ENCODE measurements at regions of chr1 and their contacts with region 1.

Region 1: DNA sequence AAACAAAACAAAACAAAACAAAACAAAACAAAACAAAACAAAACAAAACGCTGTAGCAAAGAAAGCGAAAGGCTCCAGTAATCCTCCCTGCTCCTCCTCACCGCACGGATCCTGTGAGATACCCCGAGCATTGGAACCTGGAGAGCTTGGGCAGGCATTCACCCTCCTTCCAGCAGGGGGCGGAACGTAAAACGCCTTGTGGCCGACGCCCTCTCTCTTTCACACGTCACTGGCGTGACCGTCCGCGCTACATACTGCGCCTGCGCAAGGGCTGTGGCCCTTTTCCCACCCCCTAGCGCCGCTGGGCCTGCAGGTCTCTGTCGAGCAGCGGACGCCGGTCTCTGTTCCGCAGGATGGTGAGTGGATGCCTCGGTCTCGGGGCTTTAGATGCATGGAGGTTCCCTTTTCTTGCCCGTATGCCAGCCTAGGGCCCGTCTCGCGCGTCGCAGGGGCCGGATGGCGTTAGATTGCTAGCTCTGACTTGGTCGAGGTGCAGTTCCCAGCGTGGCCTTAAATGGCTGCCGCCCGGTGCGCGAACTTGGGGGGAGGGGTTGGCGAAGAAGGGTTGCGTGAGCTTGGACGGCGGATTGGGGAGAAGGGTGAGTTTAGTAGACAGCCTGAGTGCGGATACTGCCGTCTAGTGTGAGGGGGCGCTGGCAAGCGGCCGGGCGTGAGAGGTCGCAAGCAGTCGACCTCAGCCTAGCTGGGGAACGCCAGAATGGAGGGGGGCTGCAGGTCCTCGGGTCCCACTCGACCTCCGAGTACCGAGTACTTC is at the start of gene RPL5:
- DNase-seq: peak; percentile 97
- ATAC-seq: peak; percentile 93
- H3K4me3 Mint-ChIP-seq: peak within 1 kb of the TSS; percentile 95
- H3K27ac Mint-ChIP-seq: peak within 1 kb of the TSS; percentile 97
- H3K4me1 Mint-ChIP-seq: peaks cover 35% of the 10 kb centered on the region
- H3K27me3 Mint-ChIP-seq: no peaks in the 10 kb centered on the region; the same call in 1 of the 2 replicates
- CTCF ChIP-seq: peak; percentile 81
- total RNA-seq, gene RPL5: 1,430 to 1,486 TPM (median 1,433 TPM) in 3 replicates

Region 2: DNA sequence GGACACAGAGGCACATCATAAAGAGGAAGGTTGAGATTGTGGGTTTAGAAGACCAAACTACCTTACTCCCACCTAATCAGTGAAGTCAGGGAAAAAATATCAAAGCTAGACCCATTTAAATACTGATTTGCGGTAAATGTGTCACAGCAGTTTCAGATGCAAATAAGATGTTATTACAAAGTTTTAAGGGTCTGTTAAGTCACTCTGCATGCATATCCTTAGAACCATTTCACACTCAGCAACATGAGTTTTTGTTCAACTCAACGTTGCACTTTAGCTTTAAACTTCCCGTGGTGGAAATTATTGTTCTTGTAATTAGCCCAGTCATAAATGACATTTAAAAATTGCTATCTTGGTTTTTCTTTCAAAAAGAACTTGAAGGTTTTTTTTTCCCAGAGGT is 498.3 kb before region 1 on chr1:
- CTCF ChIA-PET with region 1: no interaction called
- POLR2A ChIA-PET with region 1: no interaction called
- DNase-seq: no peak
- ATAC-seq: no peak
- H3K4me3 Mint-ChIP-seq: no peak overlapping the region
- H3K27ac Mint-ChIP-seq: no peak overlapping the region
- H3K4me1 Mint-ChIP-seq: no peaks in the 10 kb centered on the region; the same call in 1 of the 2 replicates
- H3K27me3 Mint-ChIP-seq: no peaks in the 10 kb centered on the region
- CTCF ChIP-seq: no peak

Region 3: DNA sequence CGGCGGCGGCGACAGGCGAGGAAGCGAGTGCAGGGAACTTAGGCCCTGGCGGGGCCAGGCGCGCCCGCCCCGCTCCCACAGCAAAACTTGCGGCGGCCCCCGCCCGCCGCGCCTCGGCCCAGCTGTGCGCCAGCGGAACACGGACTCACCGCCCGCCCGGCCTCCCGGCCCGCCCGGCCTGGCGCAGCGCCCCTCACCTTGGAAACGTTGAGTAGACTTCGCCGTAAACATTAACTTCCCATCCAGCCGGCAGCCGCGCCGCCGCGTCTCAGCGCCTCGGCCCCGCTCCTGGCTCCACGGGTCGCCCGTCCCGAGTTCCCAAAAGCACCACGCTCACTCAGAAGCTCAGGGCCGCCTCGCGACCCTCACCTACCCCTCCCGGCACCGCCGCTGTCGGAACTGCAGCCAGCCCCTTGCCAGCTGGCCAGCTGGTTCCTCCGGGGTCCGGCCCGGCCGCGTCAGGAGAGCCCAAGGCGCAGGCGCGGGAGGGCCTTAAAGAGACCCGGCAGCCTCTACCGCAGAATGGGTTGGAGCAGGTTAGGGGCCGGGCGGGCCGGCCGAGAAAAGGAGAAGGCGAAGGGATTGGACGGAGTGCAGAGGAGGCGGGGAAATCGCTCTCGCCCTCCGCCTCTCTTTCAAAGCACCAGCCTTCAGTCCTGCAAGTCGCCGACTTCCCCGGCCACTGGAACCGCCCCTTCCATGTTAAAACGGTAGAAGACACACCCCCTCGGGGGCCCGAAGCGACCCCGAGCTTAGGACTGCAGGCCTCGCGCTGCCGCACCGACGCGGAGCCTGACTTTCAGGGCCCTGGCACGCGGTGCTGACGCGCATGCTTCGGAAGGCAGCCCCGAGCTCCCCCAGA is 47.1 kb before region 1 on chr1 and contains the start of gene EVI5:
- CTCF ChIA-PET with region 1: interaction called, 11 read pairs
- POLR2A ChIA-PET with region 1: interaction called, 5 read pairs
- DNase-seq: peak; percentile 97
- ATAC-seq: peak; percentile 99
- H3K4me3 Mint-ChIP-seq: peak within 1 kb of the TSS; percentile 80
- H3K27ac Mint-ChIP-seq: peak within 1 kb of the TSS; percentile 30; the same call in 1 of the 2 replicates
- H3K4me1 Mint-ChIP-seq: peaks cover 16% of the 10 kb centered on the region
- H3K27me3 Mint-ChIP-seq: peaks cover 24% of the 10 kb centered on the region
- CTCF ChIP-seq: no peak
- total RNA-seq, gene EVI5: 11.4 to 15.5 TPM (median 14.3 TPM) in 3 replicates

Region 4: DNA sequence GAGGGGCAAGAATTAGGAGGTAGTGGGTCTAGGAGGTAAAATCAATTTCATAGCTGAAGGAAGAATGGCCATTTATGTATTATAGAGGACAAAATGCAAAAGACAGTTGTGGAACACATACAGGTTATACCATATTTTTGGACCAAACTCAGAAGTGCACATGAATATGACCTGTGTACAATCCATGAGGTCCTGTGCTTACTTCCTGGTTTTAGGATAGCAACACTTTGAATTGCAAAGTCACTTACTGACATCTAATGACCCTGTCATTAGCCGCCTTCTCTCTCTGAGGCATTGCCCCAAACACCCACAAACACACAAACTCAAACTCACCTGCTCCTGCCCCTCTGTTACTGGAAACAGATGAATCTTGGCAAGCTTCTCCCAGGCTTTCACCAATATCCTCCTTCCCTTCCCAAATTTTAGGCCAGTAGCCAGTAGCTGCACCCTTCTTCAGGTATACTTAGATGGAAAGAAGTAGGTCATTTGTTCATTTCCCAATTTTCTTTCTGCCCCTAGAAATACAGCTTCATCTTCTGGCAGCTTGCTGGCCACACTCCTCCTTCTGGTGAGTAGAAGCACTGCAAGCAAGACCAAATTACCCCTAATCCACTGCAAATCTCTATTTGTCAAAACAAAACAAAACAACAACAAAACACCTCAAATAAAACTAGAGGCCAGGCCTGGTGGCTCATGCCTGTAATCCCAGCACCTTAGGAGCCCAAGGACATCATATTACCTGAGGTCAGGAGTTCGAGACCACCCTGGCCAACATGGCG is 13.8 kb before region 1 on chr1:
- CTCF ChIA-PET with region 1: interaction called, 25 read pairs
- POLR2A ChIA-PET with region 1: interaction called, 5 read pairs
- DNase-seq: peak; percentile 20
- ATAC-seq: peak; percentile 80
- H3K4me3 Mint-ChIP-seq: no peak overlapping the region
- H3K27ac Mint-ChIP-seq: peak overlapping the region; percentile 44; the same call in 1 of the 2 replicates
- H3K4me1 Mint-ChIP-seq: peaks cover 2% of the 10 kb centered on the region; the same call in 1 of the 2 replicates
- H3K27me3 Mint-ChIP-seq: no peaks in the 10 kb centered on the region
- CTCF ChIP-seq: peak; percentile 40

Region 5: DNA sequence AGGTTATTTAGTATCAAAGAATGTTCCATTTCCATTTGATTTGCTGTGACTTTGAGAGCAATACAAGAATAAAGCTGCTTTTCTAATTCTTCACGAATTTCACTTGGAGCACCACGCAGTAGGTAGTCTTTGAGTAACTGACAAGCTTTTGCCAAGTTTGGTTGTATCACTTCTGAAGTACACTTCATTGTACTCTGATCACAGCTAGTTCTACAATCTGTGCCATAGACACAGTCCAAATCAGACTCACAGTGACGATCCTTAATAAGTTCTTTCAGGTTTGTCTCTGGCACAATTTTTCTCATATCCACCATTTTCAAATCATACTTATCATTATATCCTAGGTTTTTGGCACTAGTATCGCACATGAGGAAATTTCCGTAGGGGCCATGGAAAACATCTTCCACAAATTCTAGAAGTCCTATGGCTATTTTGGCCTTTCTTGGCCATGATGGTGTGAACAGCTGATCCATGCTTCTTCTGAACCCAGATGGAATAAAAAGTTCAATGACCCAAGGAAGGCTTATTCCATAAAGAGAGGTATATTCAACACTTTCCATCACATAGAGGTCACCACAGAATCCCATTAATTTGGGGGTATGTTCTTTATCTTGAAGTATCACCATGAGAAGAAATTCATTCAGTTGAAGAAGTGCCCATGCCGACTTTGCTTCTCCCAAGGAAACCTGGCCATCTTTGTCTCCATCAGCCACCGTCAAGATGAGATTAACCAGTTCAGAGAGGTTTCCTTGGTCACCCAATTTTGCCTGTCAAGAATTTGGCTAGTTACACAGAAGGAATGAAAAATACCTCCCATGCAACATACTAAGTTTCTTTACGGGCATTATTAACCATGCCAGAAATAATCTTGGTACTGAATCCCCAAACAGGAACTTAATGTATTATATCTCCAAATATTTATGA is 11.7 kb after region 1 on chr1:
- CTCF ChIA-PET with region 1: interaction called, 5 read pairs
- POLR2A ChIA-PET with region 1: interaction called, 12 read pairs
- DNase-seq: no peak
- ATAC-seq: peak; percentile 11; the same call in 1 of the 2 replicates
- H3K4me3 Mint-ChIP-seq: no peak overlapping the region
- H3K27ac Mint-ChIP-seq: no peak overlapping the region
- H3K4me1 Mint-ChIP-seq: no peaks in the 10 kb centered on the region
- H3K27me3 Mint-ChIP-seq: no peaks in the 10 kb centered on the region
- CTCF ChIP-seq: no peak

Region 6: DNA sequence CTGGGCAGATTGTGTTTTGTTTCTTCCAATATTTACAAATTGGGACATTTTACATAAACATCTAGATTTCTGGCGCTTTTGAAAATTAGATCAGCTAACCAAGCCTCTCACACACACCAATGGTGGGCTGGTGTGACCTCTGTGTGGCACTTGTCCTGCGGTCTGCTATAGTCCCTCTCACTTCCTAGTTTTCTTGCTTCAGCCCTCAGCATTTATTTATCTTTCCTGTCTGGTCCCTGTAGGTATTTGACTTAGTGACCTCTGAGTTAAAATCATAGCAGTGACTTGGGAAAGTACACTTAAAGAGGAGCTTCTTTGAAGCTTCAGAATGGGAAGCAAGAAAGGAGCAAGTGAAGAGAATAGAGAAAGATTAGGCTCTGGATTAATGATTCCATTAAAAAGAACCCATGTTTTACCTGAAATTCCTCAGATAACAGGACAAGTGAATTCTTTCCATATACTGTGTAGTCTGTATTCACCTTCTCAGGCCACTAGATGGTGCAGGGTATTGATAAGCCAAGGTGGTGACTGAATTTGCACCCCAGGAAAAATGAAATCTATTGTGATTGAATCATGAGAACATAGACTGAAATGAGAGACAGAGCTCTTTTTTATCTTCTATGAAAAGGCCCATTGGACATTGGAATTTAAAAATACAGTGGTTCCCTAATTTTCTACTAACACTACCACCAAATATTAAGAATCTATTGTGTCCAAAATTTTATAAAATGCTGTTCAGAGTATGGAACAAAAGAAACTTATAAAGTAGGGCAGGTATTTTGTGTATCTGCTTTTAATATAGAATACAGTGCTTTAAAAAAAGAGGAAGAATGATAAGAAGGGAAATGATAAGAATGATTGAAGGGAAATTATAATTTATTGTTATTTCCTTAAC is 136.4 kb after region 1 on chr1:
- CTCF ChIA-PET with region 1: no interaction called
- POLR2A ChIA-PET with region 1: no interaction called
- DNase-seq: no peak
- ATAC-seq: peak; percentile 76
- H3K4me3 Mint-ChIP-seq: no peak overlapping the region
- H3K27ac Mint-ChIP-seq: no peak overlapping the region
- H3K4me1 Mint-ChIP-seq: peaks cover 20% of the 10 kb centered on the region
- H3K27me3 Mint-ChIP-seq: peaks cover 36% of the 10 kb centered on the region
- CTCF ChIP-seq: no peak